Pancreas (tissue), 10 donors: ENCODE measurements at regions of chr6 and their contacts with region 1.

Region 1: DNA sequence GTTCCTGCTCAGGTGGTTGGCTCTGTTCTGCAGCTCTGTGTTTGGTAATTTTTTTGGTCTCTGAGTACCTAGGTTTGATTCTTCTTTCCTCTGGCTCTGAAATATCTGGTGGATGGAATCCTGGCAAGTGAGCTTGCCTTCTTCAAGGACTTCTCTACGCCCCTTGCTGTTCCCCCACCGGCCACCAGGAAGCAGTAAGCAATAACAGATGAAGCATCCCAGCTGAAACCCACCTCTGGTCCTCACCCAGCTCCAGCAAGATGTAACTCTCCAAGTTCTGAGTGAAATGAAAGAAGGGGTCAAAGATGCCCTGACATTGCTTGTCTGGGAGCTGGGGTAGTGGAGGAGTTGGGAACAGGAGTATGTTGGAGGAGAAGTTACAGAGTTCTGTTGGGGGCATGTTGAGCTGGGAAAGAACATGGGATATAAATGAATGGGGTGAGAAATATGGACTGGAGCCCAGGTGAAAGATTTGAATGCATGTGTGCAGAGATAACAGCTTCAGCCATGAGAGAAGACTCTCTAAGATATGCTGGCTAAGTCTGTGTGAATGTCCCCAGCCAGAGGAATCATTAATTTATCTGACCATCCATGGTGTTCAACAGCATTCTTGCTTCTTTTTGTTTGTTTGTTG is 51.3 kb upstream of the GLP1R start:
- DNase-seq: peak in 4 of 6 donors; percentile 23 to 68 (median 32)
- ATAC-seq: peak in 3 of 4 donors; percentile 68 to 80 (median 74)
- H3K4me3 ChIP-seq: no peak overlapping the region
- H3K27ac ChIP-seq: no peak overlapping the region
- H3K4me1 ChIP-seq: peaks cover 0 to 6% (median 4%) of the 10 kb centered on the region in 3 donors
- H3K27me3 ChIP-seq: no peaks in the 10 kb centered on the region
- CTCF ChIP-seq: peak; percentile 19 to 34 (median 32)

Region 2: GRCh38 chr6:39083231-39083634 is 86.0 kb after region 1 on chr6:
- intact Hi-C with region 1: no loop called
- DNase-seq: no peak
- ATAC-seq: peak in 2 of 4 donors; percentile 26 to 61
- H3K4me3 ChIP-seq: no peak overlapping the region
- H3K27ac ChIP-seq: no peak overlapping the region
- H3K4me1 ChIP-seq: no peaks in the 10 kb centered on the region
- H3K27me3 ChIP-seq: no peaks in the 10 kb centered on the region
- CTCF ChIP-seq: no peak

Region 3: GRCh38 chr6:39102071-39102820 is 105.0 kb after region 1 on chr6:
- intact Hi-C with region 1: loop called in 1 of 3 experiments (anchors 10 kb)
- DNase-seq: peak in 5 of 6 donors; percentile 29 to 75 (median 63)
- ATAC-seq: peak; percentile 84 to 88 (median 85)
- H3K4me3 ChIP-seq: no peak overlapping the region
- H3K27ac ChIP-seq: peak overlapping the region in 1 of 4 donors; percentile 15
- H3K4me1 ChIP-seq: peaks cover 0 to 27% (median 12%) of the 10 kb centered on the region in 3 donors
- H3K27me3 ChIP-seq: no peaks in the 10 kb centered on the region
- CTCF ChIP-seq: peak in 3 of 4 donors; percentile 12 to 19 (median 17)